GM10248 (cell line): ENCODE measurements at regions of chr2 and their contacts with region 1.

Region 1: DNA sequence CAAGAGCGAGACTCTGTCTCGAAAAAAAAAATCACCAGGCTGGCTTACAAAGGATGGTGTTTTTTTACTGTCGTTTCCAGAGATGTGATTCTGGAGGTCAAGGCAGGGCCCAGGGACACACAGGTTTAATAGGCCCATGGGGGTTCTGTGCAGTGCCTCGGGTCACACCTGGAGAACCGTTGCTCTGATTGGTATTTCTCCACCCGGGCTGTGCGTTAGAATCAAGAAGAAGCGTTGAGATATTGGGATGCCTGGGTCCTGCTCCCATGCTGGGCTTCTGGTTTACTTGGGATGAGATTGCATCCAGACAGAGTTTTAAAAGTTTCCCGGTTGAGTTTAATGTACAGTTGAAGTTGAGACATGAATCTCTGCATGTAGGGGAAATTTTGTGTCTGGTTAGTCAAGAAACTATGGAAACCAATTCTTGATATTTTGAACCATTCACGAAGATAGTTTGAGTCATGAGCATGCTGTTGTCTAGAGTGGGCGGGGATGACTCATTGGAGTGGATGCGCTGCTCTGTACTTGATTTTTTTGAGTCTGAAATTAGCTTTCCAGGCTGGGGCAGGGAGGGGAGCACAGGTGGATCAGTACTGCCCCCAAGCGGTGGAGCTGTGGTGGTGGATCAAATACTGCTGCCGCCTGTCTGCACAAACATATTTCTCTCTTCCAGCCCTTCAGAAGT is 50.1 kb downstream of the GREB1 start:
- DNase-seq: peak; percentile 87
- CTCF ChIP-seq: peak; percentile 80

Region 2: DNA sequence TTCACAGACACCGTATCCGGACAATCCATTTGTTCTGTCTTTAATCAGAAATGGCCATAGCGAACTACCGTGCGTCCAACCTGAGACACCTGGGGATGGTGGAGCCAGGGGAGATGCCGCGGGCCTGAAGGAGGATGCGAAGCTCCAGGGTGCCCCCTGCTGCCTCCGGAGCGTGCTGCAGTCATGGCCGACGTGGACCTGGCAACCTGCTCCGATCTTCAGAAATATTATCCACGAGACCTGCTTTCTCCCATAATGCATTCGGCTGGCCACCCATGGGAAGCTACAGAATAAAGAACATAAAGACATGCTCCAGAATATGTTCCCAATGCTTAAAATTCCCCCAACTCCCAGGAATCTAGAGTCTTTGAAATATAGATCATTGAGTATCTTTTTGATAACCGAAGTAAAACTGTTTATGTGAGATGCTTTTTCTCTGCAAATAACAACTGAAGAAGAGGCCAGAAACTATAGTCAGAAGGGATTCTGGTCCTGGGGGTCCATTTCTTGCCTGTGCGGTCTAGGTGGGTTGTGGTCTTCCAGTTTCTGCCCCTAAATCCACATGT is 459.4 kb before region 1 on chr2:
- CTCF ChIA-PET with region 1: interaction called, 207 read pairs
- POLR2A ChIA-PET with region 1: no interaction called
- DNase-seq: peak; percentile 79
- CTCF ChIP-seq: peak; percentile 80

Region 3: GRCh38 chr2:11234309-11234708 is 349.7 kb before region 1 on chr2:
- CTCF ChIA-PET with region 1: interaction called, 11 read pairs
- POLR2A ChIA-PET with region 1: no interaction called
- DNase-seq: peak; percentile 18
- CTCF ChIP-seq: peak; percentile 43

Region 4: DNA sequence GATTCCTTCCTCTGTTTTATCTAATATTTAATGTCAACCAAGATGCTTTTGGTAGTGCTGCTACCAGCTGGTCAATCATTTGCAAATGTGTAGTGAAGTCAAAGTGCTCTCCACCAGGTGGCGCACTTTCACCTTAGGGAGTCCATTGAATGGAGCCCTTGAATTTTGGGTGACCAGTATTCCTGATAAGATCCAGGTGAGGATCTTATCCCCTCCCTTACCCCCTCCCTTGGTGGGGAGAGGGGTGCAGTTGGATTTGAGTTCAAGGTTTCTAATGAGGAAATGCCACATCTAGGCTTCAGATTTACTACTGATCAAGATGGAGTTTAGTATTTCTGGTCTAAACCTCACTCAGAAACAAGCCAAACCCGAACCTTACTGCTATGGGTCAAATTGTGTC is 106.0 kb before region 1 on chr2:
- CTCF ChIA-PET with region 1: interaction called, 196 read pairs
- POLR2A ChIA-PET with region 1: no interaction called
- DNase-seq: peak; percentile 69
- CTCF ChIP-seq: peak; percentile 85

Region 5: DNA sequence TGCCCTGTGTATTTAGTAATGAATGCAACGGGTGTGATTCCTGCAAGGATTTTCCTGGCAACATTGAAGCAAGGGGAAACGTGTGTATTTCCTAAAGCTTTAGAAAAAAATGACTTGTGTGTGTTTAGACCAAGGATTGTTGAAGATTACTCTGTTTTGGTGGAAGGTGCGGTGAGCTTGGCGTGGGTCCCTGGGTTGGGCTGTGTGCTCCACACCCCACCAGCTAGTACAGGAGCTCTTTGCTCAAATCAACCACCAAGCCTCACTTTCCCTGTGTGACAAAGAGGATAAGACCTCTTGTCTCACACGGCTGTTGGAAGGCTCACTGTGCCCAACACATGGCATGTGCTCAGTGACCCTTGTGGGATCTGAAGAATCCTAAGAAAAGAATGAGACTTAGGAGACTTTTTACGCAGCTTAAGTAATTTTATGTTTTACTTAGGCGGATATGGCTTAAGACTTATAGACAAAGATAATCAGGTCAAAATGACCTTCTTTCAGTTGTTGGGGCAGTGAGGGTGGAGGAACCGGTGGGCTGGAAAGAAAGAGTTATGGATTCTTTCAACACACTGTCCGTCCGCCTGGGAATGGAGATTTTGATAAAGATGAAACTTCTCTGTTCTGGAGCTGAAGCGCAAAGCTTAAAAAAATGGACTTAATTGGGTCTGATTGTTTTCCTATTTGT is 71.4 kb before region 1 on chr2:
- CTCF ChIA-PET with region 1: interaction called, 10 read pairs
- POLR2A ChIA-PET with region 1: no interaction called
- DNase-seq: no peak
- CTCF ChIP-seq: no peak

Region 6: GRCh38 chr2:11562011-11562410 is 22.0 kb before region 1 on chr2:
- CTCF ChIA-PET with region 1: interaction called, 59 read pairs
- POLR2A ChIA-PET with region 1: no interaction called
- DNase-seq: no peak
- CTCF ChIP-seq: no peak

Region 7: GRCh38 chr2:11598228-11598731 is 14.3 kb after region 1 on chr2:
- CTCF ChIA-PET with region 1: interaction called, 27 read pairs
- POLR2A ChIA-PET with region 1: no interaction called
- DNase-seq: no peak
- CTCF ChIP-seq: no peak

Region 8: GRCh38 chr2:11726384-11726783 is 142.4 kb after region 1 on chr2:
- CTCF ChIA-PET with region 1: no interaction called
- POLR2A ChIA-PET with region 1: no interaction called
- DNase-seq: no peak
- CTCF ChIP-seq: no peak